Right ventricle myocardium inferior (tissue), 1 donor: ENCODE measurements at regions of chr9 and their contacts with region 1.

Region 1: DNA sequence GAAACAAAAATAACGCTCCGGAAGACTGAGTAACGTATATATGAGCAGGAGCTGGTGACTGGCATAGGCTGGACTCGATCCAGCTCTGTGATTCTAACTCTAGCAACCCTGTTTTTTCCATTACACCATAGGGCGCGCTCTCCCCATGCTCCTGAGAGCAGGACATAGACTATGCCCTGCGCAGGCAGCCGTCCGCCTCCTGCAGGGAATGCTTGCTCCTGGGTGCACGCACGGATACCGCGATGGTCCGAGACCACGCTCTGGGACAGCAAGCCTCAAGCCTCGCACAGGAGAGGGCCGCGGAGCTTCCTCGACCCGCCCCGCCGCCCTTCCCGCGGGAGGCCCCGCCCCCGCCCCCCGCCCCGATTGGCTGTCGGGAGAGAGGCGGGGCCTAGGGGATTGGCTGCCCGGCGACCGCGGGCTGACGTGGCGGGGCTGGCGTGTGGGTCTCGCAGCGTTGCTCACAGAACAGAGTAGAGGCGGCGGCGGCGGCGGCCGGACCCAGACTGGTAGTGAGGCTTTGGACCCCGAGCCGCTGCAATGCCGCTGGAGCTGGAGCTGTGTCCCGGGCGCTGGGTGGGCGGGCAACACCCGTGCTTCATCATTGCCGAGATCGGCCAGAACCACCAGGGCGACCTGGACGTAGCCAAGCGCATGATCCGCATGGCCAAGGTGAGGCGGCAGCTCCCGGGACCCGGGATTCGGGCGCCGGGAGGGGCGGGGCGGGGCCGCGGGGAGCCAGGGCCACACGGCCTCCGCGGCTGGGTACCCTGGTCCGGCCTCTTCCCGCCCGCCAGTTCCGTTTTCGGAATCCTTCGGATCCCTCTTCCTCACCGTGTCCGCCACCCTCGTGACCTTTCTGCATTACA is at the start of gene NANS:
- DNase-seq: peak; percentile 96
- ATAC-seq: peak; percentile 99
- total RNA-seq, gene NANS: 37.2 TPM

Region 2: GRCh38 chr9:97575673-97576200 is 480.8 kb before region 1 on chr9:
- intact Hi-C with region 1: no loop called
- DNase-seq: no peak
- ATAC-seq: no peak

Region 3: DNA sequence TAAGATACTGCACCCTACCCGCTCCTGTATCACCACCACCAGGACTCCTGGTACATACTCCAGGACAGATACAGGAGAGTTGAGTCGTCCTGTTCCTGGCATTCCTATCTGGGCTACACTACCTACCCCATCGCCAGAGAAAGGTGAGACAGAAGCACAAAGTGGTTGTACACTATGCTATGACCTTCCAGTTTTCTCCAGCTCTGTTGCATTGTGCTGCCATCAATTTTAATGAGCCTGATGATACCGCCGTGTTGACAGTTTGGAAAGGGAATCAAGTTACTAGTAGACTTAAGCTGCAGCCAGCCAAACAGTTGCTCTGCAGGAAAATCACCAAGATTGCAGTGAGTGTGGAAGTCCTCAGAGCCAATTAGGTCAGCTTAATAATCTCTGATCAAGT is 38.2 kb before region 1 on chr9:
- intact Hi-C with region 1: loop called (anchors 5 kb)
- DNase-seq: no peak
- ATAC-seq: peak; percentile 52

Region 4: GRCh38 chr9:98037357-98037756 is 19.1 kb before region 1 on chr9:
- intact Hi-C with region 1: loop called (anchors 2 kb)
- DNase-seq: no peak
- ATAC-seq: peak; percentile 91